Activated B cell treated with CpG ODN at 0.5 μM for 24 hours (primary cell): ENCODE measurements at regions of chr9 and their contacts with region 1.

Region 1: DNA sequence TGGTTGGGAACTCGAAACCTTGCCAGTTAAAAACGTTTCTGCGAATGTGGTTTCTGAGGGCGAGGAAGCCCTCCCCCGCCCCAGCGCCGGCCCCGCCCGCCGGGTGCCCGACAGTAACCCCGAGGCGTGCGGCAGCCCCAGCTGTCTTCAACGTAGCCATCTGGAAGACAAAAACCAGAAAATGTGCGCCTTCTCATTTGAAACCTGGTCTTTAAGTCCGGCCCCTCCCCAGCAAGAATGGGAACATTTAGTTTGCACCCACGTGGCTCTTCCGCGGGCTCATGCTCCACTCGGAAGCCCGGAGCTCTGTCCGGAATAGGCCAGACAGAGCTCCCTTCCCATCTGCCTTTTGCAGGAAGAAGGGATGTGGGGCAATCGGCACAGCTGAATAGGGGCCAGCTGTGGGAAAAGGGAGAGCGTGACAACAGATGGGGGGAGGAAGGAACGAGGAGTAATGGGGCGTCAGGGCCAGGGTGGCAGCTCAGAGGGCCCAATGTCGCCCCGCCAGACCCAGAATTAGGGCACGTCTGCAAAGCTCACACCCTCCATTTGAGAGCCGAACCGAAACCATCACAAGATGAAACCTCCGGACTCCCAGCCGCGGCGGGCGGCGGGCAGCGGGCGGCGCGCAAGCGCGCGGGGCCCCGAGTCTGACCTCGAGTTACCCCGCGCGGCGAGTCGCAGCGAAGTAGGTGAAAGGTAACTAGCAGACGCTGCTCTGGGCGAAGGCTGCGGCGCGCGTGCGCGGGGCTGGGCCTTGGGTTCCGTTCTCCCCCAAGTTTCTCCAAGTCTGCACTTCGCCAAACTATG is 63.4 kb upstream of the ABCA1 start:
- DNase-seq: peak; percentile 69
- ATAC-seq: peak; percentile 80
- H3K4me3 Mint-ChIP-seq: peak overlapping the region; percentile 86
- H3K27ac Mint-ChIP-seq: peak overlapping the region; percentile 69
- H3K4me1 Mint-ChIP-seq: peaks cover 33% of the 10 kb centered on the region
- H3K27me3 Mint-ChIP-seq: peaks cover 2% of the 10 kb centered on the region
- CTCF ChIP-seq: no peak

Region 2: GRCh38 chr9:104868687-104869404 is 122.5 kb before region 1 on chr9:
- CTCF ChIA-PET with region 1: no interaction called
- POLR2A ChIA-PET with region 1: no interaction called
- intact Hi-C with region 1: loop called (anchors 2 kb)
- DNase-seq: peak; percentile 26
- ATAC-seq: peak; percentile 93
- H3K4me3 Mint-ChIP-seq: peak overlapping the region; percentile 65
- H3K27ac Mint-ChIP-seq: peak overlapping the region; percentile 43
- H3K4me1 Mint-ChIP-seq: peaks cover 33% of the 10 kb centered on the region
- H3K27me3 Mint-ChIP-seq: no peaks in the 10 kb centered on the region
- CTCF ChIP-seq: no peak

Region 3: DNA sequence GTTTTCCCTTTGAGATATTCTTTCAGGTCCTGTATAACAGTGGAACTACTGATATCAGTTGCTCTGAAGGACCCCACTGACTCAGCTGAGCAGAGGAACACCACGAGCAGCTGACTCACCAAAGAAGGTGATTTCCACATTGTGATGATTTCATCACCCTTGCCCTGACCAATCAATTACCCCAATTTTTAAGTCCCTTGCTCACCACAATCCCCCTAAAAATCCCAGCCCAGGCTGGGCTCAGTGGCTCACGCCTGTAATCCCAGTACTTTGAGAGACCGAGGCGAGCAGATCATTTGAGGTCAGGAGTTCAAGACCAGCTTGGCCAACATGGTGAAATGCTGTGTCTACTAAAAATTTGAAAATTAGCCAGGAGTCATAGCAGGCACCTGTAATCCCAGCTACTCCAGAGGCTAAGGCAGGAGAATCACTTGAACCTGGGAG is 61.9 kb after region 1 on chr9:
- CTCF ChIA-PET with region 1: no interaction called
- POLR2A ChIA-PET with region 1: no interaction called
- intact Hi-C with region 1: loop called (anchors 5 kb)
- DNase-seq: no peak
- ATAC-seq: peak; percentile 68
- H3K4me3 Mint-ChIP-seq: no peak overlapping the region
- H3K27ac Mint-ChIP-seq: peak overlapping the region; percentile 27
- H3K4me1 Mint-ChIP-seq: peaks cover 16% of the 10 kb centered on the region
- H3K27me3 Mint-ChIP-seq: no peaks in the 10 kb centered on the region
- CTCF ChIP-seq: no peak

Region 4: GRCh38 chr9:105385381-105385985 is 394.1 kb after region 1 on chr9:
- CTCF ChIA-PET with region 1: no interaction called
- POLR2A ChIA-PET with region 1: no interaction called
- intact Hi-C with region 1: loop called (anchors 10 kb)
- DNase-seq: peak; percentile 17
- ATAC-seq: peak; percentile 94
- H3K4me3 Mint-ChIP-seq: peak overlapping the region; percentile 77
- H3K27ac Mint-ChIP-seq: peak overlapping the region; percentile 73
- H3K4me1 Mint-ChIP-seq: peaks cover 14% of the 10 kb centered on the region
- H3K27me3 Mint-ChIP-seq: no peaks in the 10 kb centered on the region
- CTCF ChIP-seq: no peak